Activated CD4-positive, alpha-beta memory T cell treated with anti-CD3 and anti-CD28 coated beads for 36 hours (primary cell): ENCODE measurements at regions of chr10 and their contacts with region 1.

Region 1: DNA sequence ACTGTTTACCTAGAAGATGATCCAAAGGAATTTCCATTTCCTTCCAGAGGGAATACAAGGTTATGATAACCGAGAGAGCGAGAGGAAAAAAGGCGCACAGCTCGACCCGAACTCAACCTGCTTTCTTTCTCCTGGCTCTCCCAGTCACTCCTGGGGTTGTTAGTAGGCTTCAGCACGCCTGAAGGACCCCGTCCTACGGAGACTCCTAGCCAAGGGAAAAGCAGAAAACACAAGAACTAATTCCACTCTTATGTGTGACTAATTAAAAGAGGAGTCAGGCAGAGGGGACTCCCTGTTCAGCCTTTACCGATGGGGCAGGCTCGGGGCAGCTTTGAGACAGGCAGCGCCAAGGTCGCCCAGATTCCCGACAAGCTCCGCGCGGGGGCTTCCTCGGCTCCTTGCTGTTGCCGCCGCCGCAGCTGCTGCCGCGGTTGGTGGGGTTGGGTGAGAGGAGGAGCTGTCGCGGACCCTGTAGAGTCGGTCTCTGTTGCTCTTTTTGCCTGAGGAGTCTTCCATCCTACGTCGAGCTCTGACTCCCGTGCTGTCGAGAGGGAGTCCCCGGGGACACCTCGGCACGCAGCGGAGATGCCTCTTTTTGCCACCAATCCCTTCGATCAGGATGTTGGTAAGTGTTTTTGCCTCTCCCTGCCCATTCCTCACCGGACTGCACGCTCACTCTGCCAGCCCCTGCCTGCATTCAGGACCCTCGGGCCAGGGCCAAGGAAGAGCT is at the start of gene STAM:
- DNase-seq: peak; percentile 94
- H3K4me3 Mint-ChIP-seq: peak within 1 kb of the TSS; percentile 95
- H3K27ac Mint-ChIP-seq: peak within 1 kb of the TSS; percentile 99
- H3K4me1 Mint-ChIP-seq: peaks cover 53% of the 10 kb centered on the region
- H3K27me3 Mint-ChIP-seq: no peaks in the 10 kb centered on the region
- total RNA-seq, gene STAM: 24.5 to 29.9 TPM

Region 2: GRCh38 chr10:17454161-17455014 is 189.5 kb before region 1 on chr10 and contains the start of gene ST8SIA6:
- CTCF ChIA-PET with region 1: no interaction called
- POLR2A ChIA-PET with region 1: no interaction called
- intact Hi-C with region 1: loop called (anchors 5 kb)
- DNase-seq: peak; percentile 58
- H3K4me3 Mint-ChIP-seq: peak within 1 kb of the TSS; percentile 78
- H3K27ac Mint-ChIP-seq: no peak within 1 kb of the TSS
- H3K4me1 Mint-ChIP-seq: peaks cover 13% of the 10 kb centered on the region
- H3K27me3 Mint-ChIP-seq: peaks cover 9% of the 10 kb centered on the region
- total RNA-seq, gene ST8SIA6: 0.38 TPM in 1 of 2 experiments, not detected in the other

Region 3: GRCh38 chr10:17512341-17513001 is 131.4 kb before region 1 on chr10:
- CTCF ChIA-PET with region 1: no interaction called
- POLR2A ChIA-PET with region 1: no interaction called
- intact Hi-C with region 1: loop called (anchors 5 kb)
- DNase-seq: no peak
- H3K4me3 Mint-ChIP-seq: no peak overlapping the region
- H3K27ac Mint-ChIP-seq: peak overlapping the region; percentile 64
- H3K4me1 Mint-ChIP-seq: peaks cover 35% of the 10 kb centered on the region
- H3K27me3 Mint-ChIP-seq: no peaks in the 10 kb centered on the region

Region 4: DNA sequence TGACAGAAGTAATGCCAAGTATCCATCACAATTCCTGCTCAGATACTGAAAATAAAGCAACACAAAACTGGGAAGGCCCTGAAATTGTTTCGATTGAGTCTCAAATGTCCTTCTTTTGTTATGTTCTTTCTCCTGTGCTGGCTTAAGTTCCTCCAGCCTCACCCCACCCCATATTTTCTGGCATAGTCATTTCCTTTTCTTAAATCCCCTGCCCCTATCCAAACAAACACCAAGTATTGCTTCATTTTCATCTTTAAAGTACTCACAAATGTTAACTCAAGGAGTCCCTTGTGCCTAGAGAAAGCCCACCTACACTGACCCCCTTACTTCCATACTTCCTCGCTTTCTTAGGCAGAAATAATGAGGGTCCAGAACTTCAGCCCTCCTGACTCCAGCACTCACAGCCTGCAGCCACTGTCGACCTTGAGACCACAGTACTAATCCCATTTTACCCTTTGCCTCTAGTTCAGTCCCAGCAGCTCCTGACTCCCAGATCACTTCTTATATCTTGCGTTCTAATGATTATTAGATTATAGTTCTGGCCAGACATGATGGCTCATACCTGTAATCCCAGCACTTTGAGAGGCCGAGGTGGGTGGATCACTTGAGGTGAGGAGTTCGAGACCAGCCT is 116.3 kb before region 1 on chr10:
- CTCF ChIA-PET with region 1: no interaction called
- POLR2A ChIA-PET with region 1: no interaction called
- intact Hi-C with region 1: no loop called
- DNase-seq: no peak
- H3K4me3 Mint-ChIP-seq: no peak overlapping the region
- H3K27ac Mint-ChIP-seq: no peak overlapping the region
- H3K4me1 Mint-ChIP-seq: no peaks in the 10 kb centered on the region
- H3K27me3 Mint-ChIP-seq: peaks cover 2% of the 10 kb centered on the region

Region 5: DNA sequence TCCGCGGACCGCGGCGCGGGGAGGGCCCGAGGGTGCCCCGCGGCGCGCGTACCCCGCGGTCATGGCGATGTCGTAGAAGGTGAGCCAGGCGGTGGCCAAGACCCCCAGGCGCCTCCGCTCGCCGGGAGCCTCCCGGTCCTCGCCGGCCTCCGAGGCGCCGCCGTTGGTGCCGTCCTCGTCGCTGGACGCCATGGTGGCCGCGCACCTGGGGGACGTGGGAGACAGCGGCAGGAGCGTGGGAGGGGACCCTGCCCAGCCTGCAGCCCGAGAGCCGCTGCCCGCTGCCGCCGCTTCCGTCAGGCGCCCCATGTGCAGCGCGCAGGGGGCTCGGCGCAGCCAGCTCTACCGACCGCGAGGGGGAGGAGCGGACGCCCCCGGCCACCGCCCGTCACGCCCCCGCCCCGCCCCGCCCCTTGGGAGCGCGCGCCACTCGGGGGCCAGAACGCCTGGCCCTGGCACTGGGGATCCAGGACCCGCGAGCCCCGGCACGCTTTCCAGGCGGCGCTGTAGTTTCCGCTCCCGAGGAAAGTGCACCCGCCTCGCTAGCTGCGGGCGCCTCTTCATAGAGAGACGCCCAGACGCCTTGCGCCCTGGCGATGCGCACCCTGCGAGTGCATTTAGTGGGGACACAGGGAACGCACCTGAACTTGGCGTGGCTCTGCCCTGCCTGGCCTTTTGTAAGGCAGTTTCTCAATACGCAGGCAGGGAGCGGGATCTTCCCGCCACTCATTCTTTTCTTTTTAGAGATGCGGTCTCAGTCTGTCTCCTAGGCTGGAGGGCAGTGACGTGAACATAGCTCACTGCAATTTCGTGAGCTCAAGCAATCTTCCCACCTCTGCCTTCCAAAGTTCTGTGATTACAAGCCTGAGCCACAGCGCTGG is 26.6 kb before region 1 on chr10 and contains the start of gene HACD1:
- CTCF ChIA-PET with region 1: interaction called, 8 read pairs
- POLR2A ChIA-PET with region 1: interaction called, 6 read pairs
- intact Hi-C with region 1: loop called (anchors 1 kb)
- DNase-seq: peak; percentile 71
- H3K4me3 Mint-ChIP-seq: peak within 1 kb of the TSS; percentile 83
- H3K27ac Mint-ChIP-seq: peak within 1 kb of the TSS; percentile 45
- H3K4me1 Mint-ChIP-seq: peaks cover 4% of the 10 kb centered on the region
- H3K27me3 Mint-ChIP-seq: peaks cover 17% of the 10 kb centered on the region
- total RNA-seq, gene HACD1: 3.3 to 4.1 TPM

Region 6: GRCh38 chr10:17669185-17669872 is 25.4 kb after region 1 on chr10:
- CTCF ChIA-PET with region 1: interaction called, 4 read pairs
- POLR2A ChIA-PET with region 1: interaction called, 10 read pairs
- intact Hi-C with region 1: loop called (anchors 1 kb)
- DNase-seq: peak; percentile 81
- H3K4me3 Mint-ChIP-seq: peak overlapping the region; percentile 71
- H3K27ac Mint-ChIP-seq: peak overlapping the region; percentile 81
- H3K4me1 Mint-ChIP-seq: peaks cover 65% of the 10 kb centered on the region
- H3K27me3 Mint-ChIP-seq: no peaks in the 10 kb centered on the region

Region 7: GRCh38 chr10:17685233-17685840 is 41.4 kb after region 1 on chr10:
- CTCF ChIA-PET with region 1: interaction called, 3 read pairs
- POLR2A ChIA-PET with region 1: interaction called, 6 read pairs
- intact Hi-C with region 1: loop called (anchors 1 kb)
- DNase-seq: peak; percentile 75
- H3K4me3 Mint-ChIP-seq: no peak overlapping the region
- H3K27ac Mint-ChIP-seq: peak overlapping the region; percentile 57
- H3K4me1 Mint-ChIP-seq: peaks cover 37% of the 10 kb centered on the region
- H3K27me3 Mint-ChIP-seq: no peaks in the 10 kb centered on the region

Region 8: GRCh38 chr10:18659120-18659818 is 1015.3 kb after region 1 on chr10 and contains the start of gene ARL5B:
- CTCF ChIA-PET with region 1: no interaction called
- POLR2A ChIA-PET with region 1: interaction called, 3 read pairs
- intact Hi-C with region 1: loop called (anchors 1 kb)
- DNase-seq: peak; percentile 98
- H3K4me3 Mint-ChIP-seq: peak within 1 kb of the TSS; percentile 95
- H3K27ac Mint-ChIP-seq: peak within 1 kb of the TSS; percentile 92
- H3K4me1 Mint-ChIP-seq: peaks cover 34% of the 10 kb centered on the region
- H3K27me3 Mint-ChIP-seq: no peaks in the 10 kb centered on the region
- total RNA-seq, gene ARL5B: 16.2 to 16.3 TPM